ENCODE measurements at regions of chr17 and their contacts with region 1.

Region 1: GRCh38 chr17:39153599-39154051 is 2.2 kb upstream of the PLXDC1 start:
- DNase-seq: peak; percentile 93
- H3K4me3 Mint-ChIP-seq: peak overlapping the region; percentile 97
- H3K27ac Mint-ChIP-seq: peak overlapping the region; percentile 83
- H3K4me1 Mint-ChIP-seq: peaks cover 31% of the 10 kb centered on the region
- H3K27me3 Mint-ChIP-seq: peaks cover 34% of the 10 kb centered on the region

Region 2: GRCh38 chr17:39071573-39071972 is 82.1 kb before region 1 on chr17:
- CTCF ChIA-PET with region 1: interaction called, 22 read pairs
- POLR2A ChIA-PET with region 1: interaction called, 4 read pairs
- DNase-seq: no peak
- H3K4me3 Mint-ChIP-seq: no peak overlapping the region
- H3K27ac Mint-ChIP-seq: no peak overlapping the region
- H3K4me1 Mint-ChIP-seq: peaks cover 22% of the 10 kb centered on the region
- H3K27me3 Mint-ChIP-seq: no peaks in the 10 kb centered on the region

Region 3: GRCh38 chr17:39094607-39095308 is 58.9 kb before region 1 on chr17:
- CTCF ChIA-PET with region 1: interaction called, 20 read pairs
- POLR2A ChIA-PET with region 1: interaction called, 9 read pairs
- DNase-seq: peak; percentile 73
- H3K4me3 Mint-ChIP-seq: peak overlapping the region; percentile 69
- H3K27ac Mint-ChIP-seq: peak overlapping the region; percentile 88
- H3K4me1 Mint-ChIP-seq: peaks cover 68% of the 10 kb centered on the region
- H3K27me3 Mint-ChIP-seq: no peaks in the 10 kb centered on the region

Region 4: DNA sequence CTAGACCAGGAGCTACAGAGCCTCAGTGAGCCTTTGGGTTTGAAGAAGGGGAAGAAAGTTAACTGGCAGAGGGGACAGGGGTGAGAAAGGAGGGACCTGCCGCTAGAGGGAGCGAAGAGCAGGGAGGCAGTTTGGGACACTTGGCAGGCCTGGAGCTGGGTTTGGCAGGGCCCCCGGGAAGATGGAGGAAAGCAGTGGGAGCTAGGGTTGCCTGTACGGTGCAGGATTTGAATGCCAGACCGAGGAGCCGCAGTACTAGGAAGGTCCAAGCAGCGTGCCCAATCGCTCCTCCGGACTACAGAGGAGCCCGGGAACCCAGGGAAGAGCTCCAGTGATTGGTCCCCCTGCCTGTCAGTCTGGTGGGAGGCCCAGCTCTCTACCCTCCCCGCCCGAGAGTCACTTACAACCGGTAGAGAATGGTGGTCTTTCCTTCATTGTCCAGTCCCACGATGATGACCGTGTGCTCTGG is 11.1 kb after region 1 on chr17:
- CTCF ChIA-PET with region 1: interaction called, 75 read pairs
- POLR2A ChIA-PET with region 1: interaction called, 16 read pairs
- DNase-seq: peak; percentile 77
- H3K4me3 Mint-ChIP-seq: peak overlapping the region; percentile 76
- H3K27ac Mint-ChIP-seq: no peak overlapping the region
- H3K4me1 Mint-ChIP-seq: peaks cover 32% of the 10 kb centered on the region
- H3K27me3 Mint-ChIP-seq: peaks cover 36% of the 10 kb centered on the region

Region 5: DNA sequence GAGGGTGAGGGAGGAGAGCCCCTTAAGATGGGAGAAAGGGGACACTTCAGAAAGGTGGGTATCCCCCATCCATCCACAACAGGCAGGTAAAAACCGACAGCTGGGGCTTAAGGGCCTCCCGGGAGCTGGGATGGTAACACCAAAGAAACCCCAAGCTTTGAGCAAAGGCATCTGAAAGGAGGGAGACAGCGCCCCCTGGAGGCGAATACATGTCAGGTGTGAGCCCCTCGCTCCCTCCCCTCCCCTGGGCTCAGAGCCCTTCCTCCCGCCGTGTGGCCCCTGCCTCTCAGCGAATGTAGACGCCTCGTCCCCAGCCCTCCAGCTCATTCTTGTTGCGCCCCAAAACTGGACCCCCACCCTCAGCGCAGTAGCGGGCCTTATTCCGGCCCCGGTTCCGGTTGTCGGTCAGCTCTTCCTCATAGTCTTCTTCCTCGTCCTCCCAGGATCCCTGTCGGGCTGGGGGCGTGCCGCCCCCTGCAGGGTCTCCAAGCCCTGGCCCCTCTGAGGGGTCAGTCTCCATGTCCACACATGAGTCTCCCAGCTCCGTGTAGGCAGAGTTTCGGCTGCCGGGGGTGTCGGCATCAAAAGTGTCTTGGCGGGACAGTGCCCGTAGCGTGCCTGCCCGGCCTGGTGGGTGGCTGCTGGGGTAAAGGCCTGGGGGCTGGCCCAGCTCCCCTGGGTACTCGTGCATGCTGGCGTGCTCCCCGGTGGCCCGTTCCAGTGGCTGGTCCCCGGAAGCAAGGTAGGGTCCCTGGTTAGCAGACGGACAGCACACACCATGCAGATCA is 21.5 kb after region 1 on chr17:
- CTCF ChIA-PET with region 1: interaction called, 16 read pairs
- POLR2A ChIA-PET with region 1: interaction called, 11 read pairs
- DNase-seq: peak; percentile 75
- H3K4me3 Mint-ChIP-seq: no peak overlapping the region
- H3K27ac Mint-ChIP-seq: no peak overlapping the region
- H3K4me1 Mint-ChIP-seq: peaks cover 8% of the 10 kb centered on the region
- H3K27me3 Mint-ChIP-seq: no peaks in the 10 kb centered on the region

Region 6: DNA sequence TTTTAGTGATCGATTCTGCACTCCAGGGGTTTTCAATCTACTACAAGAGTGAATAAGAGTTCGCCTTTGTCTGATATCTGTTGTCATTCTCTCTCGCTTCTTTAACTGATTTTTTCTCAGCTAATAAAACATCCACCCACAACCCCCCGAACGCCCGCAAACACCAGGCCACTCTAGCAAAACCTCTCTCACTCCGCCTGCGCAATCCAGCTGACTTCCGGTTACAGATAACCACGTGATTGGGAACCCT is 46.1 kb after region 1 on chr17:
- CTCF ChIA-PET with region 1: interaction called, 21 read pairs
- POLR2A ChIA-PET with region 1: interaction called, 18 read pairs
- DNase-seq: peak; percentile 89
- H3K4me3 Mint-ChIP-seq: peak overlapping the region; percentile 93
- H3K27ac Mint-ChIP-seq: peak overlapping the region; percentile 96
- H3K4me1 Mint-ChIP-seq: peaks cover 66% of the 10 kb centered on the region
- H3K27me3 Mint-ChIP-seq: no peaks in the 10 kb centered on the region

Region 7: GRCh38 chr17:39244600-39245570 is 91.3 kb after region 1 on chr17:
- CTCF ChIA-PET with region 1: interaction called, 14 read pairs
- POLR2A ChIA-PET with region 1: interaction called, 5 read pairs
- DNase-seq: peak; percentile 89
- H3K4me3 Mint-ChIP-seq: no peak overlapping the region
- H3K27ac Mint-ChIP-seq: no peak overlapping the region
- H3K4me1 Mint-ChIP-seq: peaks cover 15% of the 10 kb centered on the region
- H3K27me3 Mint-ChIP-seq: no peaks in the 10 kb centered on the region

Region 8: GRCh38 chr17:39339272-39339671 is 185.6 kb after region 1 on chr17:
- CTCF ChIA-PET with region 1: no interaction called
- POLR2A ChIA-PET with region 1: no interaction called
- DNase-seq: no peak
- H3K4me3 Mint-ChIP-seq: no peak overlapping the region
- H3K27ac Mint-ChIP-seq: no peak overlapping the region
- H3K4me1 Mint-ChIP-seq: no peaks in the 10 kb centered on the region
- H3K27me3 Mint-ChIP-seq: no peaks in the 10 kb centered on the region

Measured in activated CD4-positive, alpha-beta memory T cell treated with anti-CD3 and anti-CD28 coated beads, Interleukin-2, amount 10 ng/mL, durations not matched to agents 7 days and 5 days (primary cell).